ENCODE measurements at regions of chr3 and their contacts with region 1.

Region 1: DNA sequence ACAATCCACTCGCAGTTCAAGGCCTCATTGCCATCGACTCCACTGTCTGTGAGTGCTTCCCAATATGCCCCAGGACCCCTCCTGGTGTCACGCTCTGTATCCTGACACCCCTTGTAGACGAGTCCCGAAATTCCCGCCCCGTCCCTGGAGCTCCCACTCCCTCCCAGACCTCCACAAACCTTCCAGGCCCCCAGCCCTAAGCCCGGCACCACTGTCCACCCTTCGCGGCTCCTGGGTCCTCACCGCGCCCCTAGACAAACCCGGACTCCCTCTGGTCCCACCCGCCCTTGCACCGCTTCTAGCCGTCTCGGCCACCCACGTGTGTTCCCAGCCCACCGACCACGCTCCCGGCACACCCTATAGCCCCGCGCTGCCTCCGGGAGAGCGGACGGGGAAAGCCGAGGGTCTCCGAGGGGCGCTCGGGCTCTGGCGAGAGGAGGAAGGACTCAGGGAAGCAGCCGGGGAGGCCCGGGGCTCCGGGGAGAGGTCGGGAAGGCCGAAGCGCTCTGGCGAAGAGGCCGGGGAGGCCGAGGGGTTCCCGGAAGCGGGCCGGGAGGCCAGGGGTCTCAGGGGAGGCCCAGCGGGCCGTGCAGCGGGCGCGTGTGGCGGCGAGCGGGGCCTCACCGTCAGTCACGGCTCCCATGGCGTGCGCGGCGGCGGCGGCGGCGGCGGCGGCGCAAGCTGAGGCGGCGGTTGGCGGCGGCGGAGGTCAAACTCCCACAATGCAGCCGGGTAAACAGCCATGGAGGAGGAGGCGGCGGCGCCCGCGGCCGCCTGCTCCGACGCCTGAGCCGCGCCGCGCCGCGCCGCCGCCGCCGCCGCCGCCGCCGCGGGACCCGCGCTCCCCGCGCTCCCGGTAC is at the starts of genes ATXN7 and THOC7:
- DNase-seq: peak; percentile 73
- H3K4me3 Mint-ChIP-seq: peak within 1 kb of the TSS; percentile 78
- H3K27ac Mint-ChIP-seq: peak within 1 kb of the TSS; percentile 76
- H3K4me1 Mint-ChIP-seq: peaks cover 42% of the 10 kb centered on the region
- H3K27me3 Mint-ChIP-seq: no peaks in the 10 kb centered on the region
- CTCF ChIP-seq: no peak
- total RNA-seq, gene ATXN7: 31.2 and 38.3 TPM in 2 replicates
- total RNA-seq, gene THOC7: 70.7 and 77.7 TPM in 2 replicates

Region 2: GRCh38 chr3:63961891-63962290 is 98.5 kb after region 1 on chr3:
- CTCF ChIA-PET with region 1: no interaction called
- intact Hi-C with region 1: loop called (anchors 10 kb)
- DNase-seq: no peak
- H3K4me3 Mint-ChIP-seq: no peak overlapping the region
- H3K27ac Mint-ChIP-seq: no peak overlapping the region
- H3K4me1 Mint-ChIP-seq: peaks cover 13% of the 10 kb centered on the region
- H3K27me3 Mint-ChIP-seq: no peaks in the 10 kb centered on the region
- CTCF ChIP-seq: no peak

Region 3: DNA sequence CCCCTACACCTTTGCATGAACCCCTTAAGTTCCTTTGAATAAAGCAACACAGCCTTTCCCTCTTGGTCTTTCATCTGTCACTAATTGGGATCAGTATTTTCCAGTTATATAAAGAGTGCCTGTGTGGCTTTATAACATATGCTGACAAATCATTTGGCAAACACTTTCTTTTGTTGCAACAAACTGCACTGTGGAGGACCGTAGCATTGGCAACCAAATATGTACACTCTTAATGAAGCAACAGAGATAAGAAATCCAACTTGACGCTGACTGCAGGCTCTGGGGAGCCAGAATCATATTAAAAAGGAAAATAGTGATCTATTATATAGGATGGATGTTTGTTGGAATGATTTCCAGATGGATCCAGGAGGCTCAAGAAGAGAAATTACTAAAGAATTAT is 482.0 kb after region 1 on chr3:
- CTCF ChIA-PET with region 1: no interaction called
- intact Hi-C with region 1: no loop called
- DNase-seq: no peak
- H3K4me3 Mint-ChIP-seq: no peak overlapping the region
- H3K27ac Mint-ChIP-seq: no peak overlapping the region
- H3K4me1 Mint-ChIP-seq: peaks cover 27% of the 10 kb centered on the region
- H3K27me3 Mint-ChIP-seq: no peaks in the 10 kb centered on the region
- CTCF ChIP-seq: no peak